Psoas muscle (tissue), 8 donors: ENCODE measurements at regions of chrX and their contacts with region 1.

Region 1: GRCh38 chrX:45515262-45516215 is 314.9 kb upstream of the DIPK2B start:
- DNase-seq: peak; percentile 69 to 81
- ATAC-seq: peak; percentile 89 to 98 (median 96)
- H3K4me3 ChIP-seq: no peak overlapping the region
- H3K27ac ChIP-seq: peak overlapping the region; percentile 50
- H3K4me1 ChIP-seq: no peaks in the 10 kb centered on the region
- H3K27me3 ChIP-seq: peaks cover 0 to 23% (median 0%) of the 10 kb centered on the region in 3 donors
- CTCF ChIP-seq: peak; percentile 64

Region 2: DNA sequence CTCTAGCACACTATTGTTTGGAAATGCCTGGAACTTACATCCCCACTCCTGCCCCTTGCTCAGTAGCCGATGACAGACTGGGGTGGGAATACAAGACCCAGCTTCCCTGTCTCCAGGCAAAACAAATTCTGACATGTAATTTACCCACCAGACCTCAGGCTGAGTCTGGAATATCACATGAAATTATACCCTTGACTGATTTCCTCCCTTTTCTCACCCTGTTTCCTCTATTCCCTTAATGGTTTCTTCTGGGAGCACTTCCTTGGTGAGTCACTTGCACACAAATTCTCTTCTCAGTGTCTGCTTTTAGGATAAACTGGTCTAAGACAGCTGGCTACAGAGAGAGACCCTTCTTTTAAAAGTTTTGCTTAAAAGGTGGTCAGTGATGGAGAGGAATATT is 249.1 kb before region 1 on chrX:
- intact Hi-C with region 1: no loop called
- DNase-seq: no peak
- ATAC-seq: no peak
- H3K4me3 ChIP-seq: no peak overlapping the region
- H3K27ac ChIP-seq: no peak overlapping the region
- H3K4me1 ChIP-seq: no peaks in the 10 kb centered on the region
- H3K27me3 ChIP-seq: peaks cover 0 to 5% (median 0%) of the 10 kb centered on the region in 3 donors
- CTCF ChIP-seq: no peak

Region 3: DNA sequence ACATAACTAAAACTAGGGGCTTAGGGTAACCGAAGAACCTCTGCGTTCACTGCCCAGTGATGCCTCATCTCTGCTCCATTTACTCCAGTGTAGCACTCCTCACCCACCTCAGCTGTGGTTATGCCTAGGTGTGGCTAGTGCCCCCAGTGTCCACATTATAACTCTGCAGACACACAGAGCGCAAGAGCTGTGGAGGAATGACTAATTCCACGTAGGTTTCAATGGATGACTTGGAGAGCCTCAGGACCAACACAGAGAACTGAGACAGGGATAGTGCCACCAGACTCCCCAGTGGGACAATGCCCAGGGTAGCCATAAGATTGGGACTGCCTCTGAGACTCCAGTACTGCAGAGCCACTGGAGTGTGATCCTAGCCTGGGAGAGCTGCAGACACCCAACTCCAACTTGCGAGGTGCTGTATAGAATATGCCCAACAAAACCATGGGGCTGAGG is 227.6 kb after region 1 on chrX:
- intact Hi-C with region 1: loop called in 1 of 2 experiments (anchors 10 kb)
- DNase-seq: no peak
- ATAC-seq: no peak
- H3K4me3 ChIP-seq: no peak overlapping the region
- H3K27ac ChIP-seq: no peak overlapping the region
- H3K4me1 ChIP-seq: no peaks in the 10 kb centered on the region
- H3K27me3 ChIP-seq: peaks cover 0 to 3% (median 0%) of the 10 kb centered on the region in 3 donors
- CTCF ChIP-seq: no peak

Region 4: DNA sequence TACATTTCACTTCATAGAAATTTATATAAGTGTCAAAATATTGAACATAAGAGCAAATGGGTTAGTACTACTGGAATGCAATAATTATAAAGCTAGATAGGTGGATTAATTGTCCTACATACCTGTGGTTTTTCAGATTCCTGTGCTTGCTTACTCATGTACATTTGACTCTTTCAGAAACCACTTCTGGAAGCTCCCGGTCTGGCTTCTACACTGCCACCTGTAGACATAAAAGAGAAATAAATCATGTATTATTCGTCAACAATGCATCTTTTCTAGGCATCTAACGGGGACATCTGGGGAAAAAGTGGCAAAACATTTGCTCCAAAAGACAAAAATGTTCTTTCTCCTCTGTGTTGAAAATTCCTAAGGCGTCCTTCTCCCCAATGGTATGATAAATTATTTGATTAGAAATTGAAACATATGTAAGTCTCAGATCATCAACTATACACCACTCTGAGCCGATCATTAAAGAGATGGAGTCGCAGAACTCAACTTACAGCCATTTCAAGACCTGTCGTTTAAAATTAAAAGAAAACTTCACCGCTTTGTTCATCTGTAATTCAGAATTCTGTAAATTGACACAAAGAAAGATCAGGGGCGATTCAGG is 333.8 kb after region 1 on chrX:
- intact Hi-C with region 1: loop called in 1 of 2 experiments (anchors 10 kb)
- DNase-seq: no peak
- ATAC-seq: no peak
- H3K4me3 ChIP-seq: no peak overlapping the region
- H3K27ac ChIP-seq: no peak overlapping the region
- H3K4me1 ChIP-seq: no peaks in the 10 kb centered on the region
- H3K27me3 ChIP-seq: peaks cover 0 to 42% (median 2%) of the 10 kb centered on the region in 3 donors
- CTCF ChIP-seq: peak; percentile 21

Region 5: DNA sequence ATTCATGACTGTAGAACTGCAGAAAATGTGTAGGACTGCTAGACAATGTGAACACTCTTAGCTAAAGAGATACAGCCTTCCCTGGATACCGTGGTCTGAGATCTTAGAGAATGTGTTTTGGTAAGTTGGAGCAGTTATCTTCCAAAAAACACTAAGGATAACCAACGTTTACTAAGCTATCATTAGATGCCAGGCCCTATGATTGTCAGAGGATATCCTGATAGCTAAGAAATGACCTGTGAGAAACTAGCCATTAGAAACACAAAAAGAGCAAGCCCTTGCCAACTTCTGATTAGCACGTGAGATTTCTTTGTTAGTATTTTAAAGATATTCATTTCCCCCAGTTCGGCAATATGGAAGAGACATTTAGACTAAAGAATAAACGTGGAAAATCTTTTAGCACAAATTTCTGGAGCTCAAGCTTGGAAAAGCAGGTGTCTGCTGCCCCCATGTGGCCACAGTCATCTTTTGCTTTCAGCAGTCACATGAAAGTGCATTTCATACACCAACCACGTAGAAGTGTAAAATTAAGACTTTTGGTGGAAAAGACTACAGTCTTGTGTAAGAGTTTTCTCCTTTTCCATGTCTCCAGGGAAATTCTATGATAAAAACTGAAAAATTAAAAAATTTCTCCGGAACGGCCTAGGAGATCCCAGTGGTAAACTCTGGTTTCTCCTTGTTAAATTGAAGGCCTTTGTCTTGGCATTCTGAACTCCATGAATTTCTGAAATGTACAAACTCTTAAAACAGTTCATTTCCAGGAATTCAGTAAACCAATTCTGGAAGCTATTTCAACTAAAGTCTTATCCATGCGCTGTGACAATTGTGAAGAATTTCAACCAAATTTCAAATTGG is 893.2 kb after region 1 on chrX:
- intact Hi-C with region 1: loop called in 1 of 2 experiments (anchors 5 kb)
- DNase-seq: peak; percentile 61 to 83
- ATAC-seq: peak in 1 of 4 donors; percentile 63
- H3K4me3 ChIP-seq: no peak overlapping the region
- H3K27ac ChIP-seq: no peak overlapping the region
- H3K4me1 ChIP-seq: no peaks in the 10 kb centered on the region
- H3K27me3 ChIP-seq: peaks cover 0 to 9% (median 0%) of the 10 kb centered on the region in 3 donors
- CTCF ChIP-seq: peak; percentile 93